IMR-90 (cell line): ENCODE measurements at regions of chr9 and their contacts with region 1.

Region 1: GRCh38 chr9:2727966-2728613 is 10.8 kb downstream of the KCNV2 start:
- DNase-seq: peak; percentile 71
- ATAC-seq: peak; percentile 90
- H3K4me3 ChIP-seq: no peak overlapping the region
- H3K27ac ChIP-seq: no peak overlapping the region
- H3K4me1 ChIP-seq: peaks cover 8% of the 10 kb centered on the region
- H3K27me3 ChIP-seq: no peaks in the 10 kb centered on the region
- CTCF ChIP-seq: peak; percentile 71
- POLR2A ChIP-seq: no peak
- RAD21 ChIP-seq: peak; percentile 64

Region 2: GRCh38 chr9:2014696-2015580 is 713.2 kb before region 1 on chr9 and contains the start of gene SMARCA2:
- CTCF ChIA-PET with region 1: no interaction called
- POLR2A ChIA-PET with region 1: no interaction called
- dilution Hi-C with region 1: no loop called
- in situ Hi-C with region 1: no loop called
- intact Hi-C with region 1: loop called (anchors 10 kb)
- DNase-seq: peak; percentile 96
- ATAC-seq: peak; percentile 90
- H3K4me3 ChIP-seq: peak within 1 kb of the TSS; percentile 86
- H3K27ac ChIP-seq: peak within 1 kb of the TSS; percentile 70
- H3K4me1 ChIP-seq: peaks cover 2% of the 10 kb centered on the region
- H3K27me3 ChIP-seq: no peaks in the 10 kb centered on the region
- CTCF ChIP-seq: no peak
- POLR2A ChIP-seq: peak; percentile 57
- RAD21 ChIP-seq: no peak
- total RNA-seq, gene SMARCA2: 26.7 and 29.2 TPM in 2 replicates

Region 3: GRCh38 chr9:2132484-2133082 is 595.5 kb before region 1 on chr9:
- CTCF ChIA-PET with region 1: interaction called, 7 read pairs
- POLR2A ChIA-PET with region 1: no interaction called
- dilution Hi-C with region 1: no loop called
- in situ Hi-C with region 1: loop called (anchors 10 kb)
- intact Hi-C with region 1: loop called (anchors 1 kb)
- DNase-seq: peak; percentile 54
- ATAC-seq: peak; percentile 73
- H3K4me3 ChIP-seq: no peak overlapping the region
- H3K27ac ChIP-seq: no peak overlapping the region
- H3K4me1 ChIP-seq: peaks cover 4% of the 10 kb centered on the region; the same call in 1 of the 2 replicates
- H3K27me3 ChIP-seq: no peaks in the 10 kb centered on the region
- CTCF ChIP-seq: peak; percentile 71
- POLR2A ChIP-seq: no peak
- RAD21 ChIP-seq: peak; percentile 85

Region 4: GRCh38 chr9:2158111-2158610 is 569.9 kb before region 1 on chr9:
- CTCF ChIA-PET with region 1: interaction called, 5 read pairs
- POLR2A ChIA-PET with region 1: no interaction called
- dilution Hi-C with region 1: no loop called
- in situ Hi-C with region 1: no loop called
- intact Hi-C with region 1: loop called (anchors 1 kb)
- DNase-seq: peak; percentile 67
- ATAC-seq: peak; percentile 54
- H3K4me3 ChIP-seq: peak overlapping the region; percentile 41
- H3K27ac ChIP-seq: peak overlapping the region; percentile 79
- H3K4me1 ChIP-seq: peaks cover 5% of the 10 kb centered on the region; the same call in 1 of the 2 replicates
- H3K27me3 ChIP-seq: no peaks in the 10 kb centered on the region
- CTCF ChIP-seq: peak; percentile 23; the same call in 1 of the 2 replicates
- POLR2A ChIP-seq: no peak
- RAD21 ChIP-seq: no peak

Region 5: GRCh38 chr9:2234371-2234893 is 493.7 kb before region 1 on chr9:
- CTCF ChIA-PET with region 1: no interaction called
- POLR2A ChIA-PET with region 1: no interaction called
- dilution Hi-C with region 1: no loop called
- in situ Hi-C with region 1: loop called (anchors 10 kb)
- intact Hi-C with region 1: no loop called
- DNase-seq: peak; percentile 21
- ATAC-seq: peak; percentile 59
- H3K4me3 ChIP-seq: no peak overlapping the region
- H3K27ac ChIP-seq: no peak overlapping the region
- H3K4me1 ChIP-seq: peaks cover 2% of the 10 kb centered on the region; the same call in 1 of the 2 replicates
- H3K27me3 ChIP-seq: no peaks in the 10 kb centered on the region
- CTCF ChIP-seq: no peak
- POLR2A ChIP-seq: no peak
- RAD21 ChIP-seq: no peak

Region 6: GRCh38 chr9:2321523-2322151 is 406.5 kb before region 1 on chr9:
- CTCF ChIA-PET with region 1: no interaction called
- POLR2A ChIA-PET with region 1: no interaction called
- dilution Hi-C with region 1: no loop called
- in situ Hi-C with region 1: no loop called
- intact Hi-C with region 1: loop called (anchors 10 kb)
- DNase-seq: no peak
- ATAC-seq: no peak
- H3K4me3 ChIP-seq: no peak overlapping the region
- H3K27ac ChIP-seq: no peak overlapping the region
- H3K4me1 ChIP-seq: no peaks in the 10 kb centered on the region
- H3K27me3 ChIP-seq: no peaks in the 10 kb centered on the region
- CTCF ChIP-seq: no peak
- POLR2A ChIP-seq: no peak
- RAD21 ChIP-seq: no peak

Region 7: DNA sequence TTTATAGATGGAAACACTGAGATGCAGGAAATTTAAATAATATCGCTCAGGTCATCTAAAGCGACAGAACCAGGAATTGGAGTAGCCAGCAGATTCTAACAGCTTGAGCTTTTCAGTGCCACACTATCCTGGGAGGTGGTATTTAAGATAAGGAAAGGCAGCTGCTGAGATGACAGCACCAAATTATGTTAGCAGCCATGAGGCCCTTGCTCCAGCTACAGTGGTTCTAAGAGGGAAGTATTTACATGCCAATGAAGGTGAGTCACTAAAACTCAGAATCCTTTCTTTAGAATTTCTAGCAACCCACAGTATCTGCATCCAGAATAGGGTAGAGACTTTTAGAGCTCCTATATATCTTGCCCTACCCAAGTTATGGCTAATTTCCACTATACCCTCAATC is 233.5 kb before region 1 on chr9:
- CTCF ChIA-PET with region 1: interaction called, 3 read pairs
- POLR2A ChIA-PET with region 1: no interaction called
- dilution Hi-C with region 1: no loop called
- in situ Hi-C with region 1: no loop called
- intact Hi-C with region 1: loop called (anchors 5 kb)
- DNase-seq: peak; percentile 88
- ATAC-seq: peak; percentile 94
- H3K4me3 ChIP-seq: no peak overlapping the region
- H3K27ac ChIP-seq: peak overlapping the region; percentile 76; the same call in 1 of the 2 replicates
- H3K4me1 ChIP-seq: peaks cover 12% of the 10 kb centered on the region
- H3K27me3 ChIP-seq: no peaks in the 10 kb centered on the region
- CTCF ChIP-seq: no peak
- POLR2A ChIP-seq: no peak
- RAD21 ChIP-seq: 0 out of 2 replicates have a peak, but pooled peaks have one; percentile 11

Region 8: GRCh38 chr9:2933165-2934095 is 205.3 kb after region 1 on chr9:
- CTCF ChIA-PET with region 1: no interaction called
- POLR2A ChIA-PET with region 1: no interaction called
- dilution Hi-C with region 1: no loop called
- in situ Hi-C with region 1: no loop called
- intact Hi-C with region 1: no loop called
- DNase-seq: no peak
- ATAC-seq: no peak
- H3K4me3 ChIP-seq: no peak overlapping the region
- H3K27ac ChIP-seq: no peak overlapping the region
- H3K4me1 ChIP-seq: no peaks in the 10 kb centered on the region
- H3K27me3 ChIP-seq: no peaks in the 10 kb centered on the region
- CTCF ChIP-seq: no peak
- POLR2A ChIP-seq: no peak
- RAD21 ChIP-seq: no peak